ENCODE measurements at regions of chr6 and their contacts with region 1.

Region 1: DNA sequence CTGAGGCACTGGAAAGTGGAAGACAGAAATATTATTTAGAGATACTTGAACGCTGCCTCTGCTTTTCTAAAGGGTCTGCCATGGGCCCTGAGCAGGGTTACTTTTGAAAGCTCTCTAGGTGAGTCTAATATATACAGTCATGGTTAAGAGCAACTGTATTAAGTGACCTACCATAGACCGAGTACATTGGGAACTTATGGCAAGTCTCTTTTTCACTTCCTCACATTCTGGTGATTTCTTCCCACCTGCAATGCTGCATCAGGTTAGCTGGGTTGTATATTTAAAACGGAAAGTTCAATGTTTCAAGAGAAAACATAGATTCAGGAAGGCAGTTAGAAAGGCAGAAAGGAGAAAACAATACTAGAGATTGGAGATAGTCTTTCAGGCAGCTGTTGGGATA is 154.7 kb downstream of the PHF3 start:
- ATAC-seq: no peak
- H3K4me3 ChIP-seq: no peak overlapping the region
- H3K27ac ChIP-seq: no peak overlapping the region
- H3K4me1 ChIP-seq: peaks cover 0 to 5% of the 10 kb centered on the region in 2 donors

Region 2: DNA sequence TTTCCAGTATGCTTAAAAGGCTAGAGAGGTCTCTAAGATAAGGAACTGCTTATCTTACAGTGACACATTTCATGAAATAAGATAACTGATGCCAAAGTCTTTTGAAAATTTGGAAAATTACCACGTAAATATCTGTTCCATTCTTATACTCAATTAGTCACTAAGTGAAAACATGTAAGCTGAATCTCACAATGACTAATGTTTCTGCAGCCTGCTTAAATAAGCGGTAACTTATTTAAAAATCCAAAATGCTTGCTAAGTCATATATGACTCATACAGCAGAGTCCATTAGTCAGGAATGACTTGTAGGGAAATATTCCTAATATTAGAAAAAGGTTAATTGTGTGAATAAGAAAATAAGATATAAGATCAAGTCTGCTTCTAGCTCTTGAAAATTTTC is 442.7 kb before region 1 on chr6:
- in situ Hi-C with region 1: loop called in 3 of 9 experiments (anchors 25 kb)
- ATAC-seq: peak in 2 of 8 experiments; percentile 85 to 89
- H3K4me3 ChIP-seq: no peak overlapping the region
- H3K27ac ChIP-seq: no peak overlapping the region
- H3K4me1 ChIP-seq: no peaks in the 10 kb centered on the region

Region 3: DNA sequence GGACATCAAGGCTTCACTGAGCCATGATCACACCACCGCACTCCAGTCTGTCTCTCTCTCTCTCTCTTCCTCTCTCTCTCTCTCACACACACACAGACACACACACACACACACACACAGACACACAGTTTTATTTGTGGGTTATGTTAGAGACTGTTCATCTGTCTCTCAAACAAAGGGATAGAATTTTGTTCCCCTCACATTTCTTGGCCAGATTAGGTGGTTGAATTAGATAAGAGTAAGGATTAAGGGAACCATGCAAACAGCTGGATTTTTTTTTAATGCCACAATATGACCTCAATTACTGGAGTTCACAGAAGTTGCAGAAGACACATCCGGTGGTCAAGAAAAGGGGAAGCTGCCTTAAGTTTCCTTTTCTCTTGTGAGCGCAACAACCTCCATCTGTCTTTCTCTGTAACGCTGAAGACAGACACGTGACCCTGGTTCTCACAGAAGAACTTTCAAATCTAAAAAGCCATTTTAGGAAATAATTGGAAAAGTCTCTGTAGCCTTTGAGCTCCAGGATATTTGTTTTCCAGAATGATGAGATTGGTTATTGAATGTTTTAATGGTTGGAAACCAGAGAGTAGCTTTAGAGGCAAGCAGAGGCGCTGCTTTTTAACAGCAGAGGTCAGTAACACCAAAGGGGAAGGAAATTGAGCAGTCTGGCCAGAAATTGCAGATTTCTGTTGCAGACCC is 437.6 kb before region 1 on chr6:
- in situ Hi-C with region 1: loop called in 3 of 9 experiments (anchors 25 kb)
- ATAC-seq: peak in 7 of 8 experiments; percentile 24 to 82 (median 63)
- H3K4me3 ChIP-seq: no peak overlapping the region
- H3K27ac ChIP-seq: no peak overlapping the region
- H3K4me1 ChIP-seq: no peaks in the 10 kb centered on the region

Measured in motor neuron (in vitro differentiated cells).